Heart right ventricle (tissue), 16 donors: ENCODE measurements at regions of chr14 and their contacts with region 1.

Region 1: DNA sequence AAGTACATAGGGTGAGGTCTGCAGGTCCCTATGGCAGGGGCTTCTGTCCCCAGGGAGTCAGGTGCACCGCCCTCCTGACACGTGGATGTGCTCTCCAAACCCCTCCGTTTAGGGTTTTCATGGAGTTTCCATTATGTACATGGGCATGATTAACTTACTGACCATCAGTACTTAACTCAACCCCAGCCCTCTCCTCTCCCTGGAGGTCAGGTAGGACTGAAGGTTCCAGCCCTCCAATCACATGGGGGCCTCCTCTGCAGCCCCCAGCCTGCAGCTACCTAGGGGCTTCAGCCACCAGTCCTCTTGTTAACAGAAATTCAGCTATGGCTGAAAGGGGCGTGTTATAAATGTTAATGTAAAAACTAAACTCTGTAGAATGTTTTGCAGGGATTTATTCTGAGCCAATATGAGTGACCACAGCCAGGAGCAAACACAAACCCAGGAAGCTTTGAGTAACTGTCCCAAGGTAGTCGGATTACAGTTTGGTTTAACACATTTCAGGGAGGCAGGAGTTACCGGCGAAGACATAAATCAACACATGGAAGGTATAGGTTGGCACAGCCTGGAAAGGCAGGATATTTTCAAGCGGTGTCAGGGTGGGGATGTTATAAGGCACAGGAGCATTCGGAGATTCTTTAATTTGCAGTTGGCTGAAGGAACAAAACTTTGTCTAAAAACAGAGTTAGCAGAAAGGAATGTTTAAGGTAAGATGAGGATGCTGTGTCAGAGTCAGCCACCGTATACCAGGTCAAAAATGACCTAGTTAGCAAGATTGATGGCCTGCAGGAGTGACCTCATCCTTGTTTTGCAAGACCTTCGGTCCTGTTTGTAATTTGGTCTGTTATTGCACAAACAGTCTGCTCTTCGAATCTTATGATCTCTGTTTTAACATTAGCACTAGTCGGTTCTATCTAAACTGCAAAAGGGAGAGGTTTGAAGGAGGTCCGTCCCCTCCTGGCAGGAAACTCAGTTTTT is 75.2 kb downstream of the TNFAIP2 start:
- DNase-seq: no peak
- ATAC-seq: peak in 5 of 8 donors; percentile 37 to 85 (median 68)
- H3K4me3 ChIP-seq: no peak overlapping the region
- H3K27ac ChIP-seq: peak overlapping the region in 6 of 10 donors; percentile 3 to 55 (median 36)
- H3K4me1 ChIP-seq: peaks cover 0 to 15% (median 0%) of the 10 kb centered on the region in 9 donors
- H3K27me3 ChIP-seq: peaks cover 0 to 4% (median 0%) of the 10 kb centered on the region in 7 donors
- CTCF ChIP-seq: no peak

Region 2: GRCh38 chr14:103031956-103032355 is 166.5 kb before region 1 on chr14:
- intact Hi-C with region 1: no loop called
- DNase-seq: no peak
- ATAC-seq: peak in 3 of 8 donors; percentile 27 to 49 (median 34)
- H3K4me3 ChIP-seq: no peak overlapping the region
- H3K27ac ChIP-seq: peak overlapping the region in 1 of 10 donors; percentile 6
- H3K4me1 ChIP-seq: peaks cover 0 to 53% (median 24%) of the 10 kb centered on the region in 9 donors
- H3K27me3 ChIP-seq: no peaks in the 10 kb centered on the region
- CTCF ChIP-seq: peak in 3 of 9 donors; percentile 4 to 13 (median 9)

Region 3: DNA sequence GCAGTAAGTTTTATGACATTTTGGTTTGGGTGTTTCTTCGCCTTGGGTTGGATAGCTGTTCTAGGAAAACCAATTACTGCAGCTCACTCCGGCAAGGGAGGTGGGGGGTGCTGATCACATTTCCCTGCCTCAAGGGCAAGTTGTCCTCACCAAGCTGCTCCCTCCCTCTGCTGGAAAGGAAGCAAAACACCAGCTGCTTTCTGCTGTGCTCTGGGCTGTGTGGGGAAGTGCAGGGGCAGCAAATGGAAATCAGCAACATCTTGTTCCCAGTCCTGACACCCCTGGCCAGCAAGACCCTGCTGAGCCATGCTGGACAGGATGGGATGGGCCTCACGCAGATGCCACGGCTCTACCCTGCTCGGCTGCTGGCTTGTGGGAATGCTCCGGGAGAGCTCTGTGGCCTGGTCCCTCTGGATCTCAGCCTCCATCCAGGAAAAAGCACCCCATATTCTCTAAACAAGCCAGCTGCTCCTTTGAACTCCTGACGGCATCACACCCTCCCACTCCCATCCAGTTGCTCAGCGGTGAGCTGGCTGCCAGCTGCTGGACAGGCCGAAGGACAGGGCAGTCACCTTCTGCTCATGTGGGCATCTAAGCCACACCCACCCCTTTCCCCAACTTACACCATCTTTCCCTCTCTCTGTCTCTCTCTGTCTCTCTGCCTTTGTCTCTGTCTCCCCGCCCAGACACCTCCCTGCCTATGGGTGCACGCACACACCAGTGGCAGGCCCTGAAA is 83.2 kb after region 1 on chr14:
- intact Hi-C with region 1: loop called in 2 of 10 experiments (anchors 10 kb)
- DNase-seq: peak in 1 of 2 donors; percentile 33
- ATAC-seq: peak; percentile 48 to 88 (median 80)
- H3K4me3 ChIP-seq: no peak overlapping the region
- H3K27ac ChIP-seq: no peak overlapping the region
- H3K4me1 ChIP-seq: peaks cover 0 to 19% (median 10%) of the 10 kb centered on the region in 9 donors
- H3K27me3 ChIP-seq: peaks cover 0 to 95% (median 60%) of the 10 kb centered on the region in 7 donors
- CTCF ChIP-seq: peak in 7 of 9 donors; percentile 20 to 45 (median 39)